ENCODE measurements at regions of chr2 and their contacts with region 1.

Region 1: GRCh38 chr2:20446917-20447436 is at the start of gene RHOB:
- DNase-seq: peak; percentile 89
- H3K4me3 Mint-ChIP-seq: peak within 1 kb of the TSS; percentile 81
- H3K27ac Mint-ChIP-seq: peak within 1 kb of the TSS; percentile 61
- H3K4me1 Mint-ChIP-seq: peaks cover 12% of the 10 kb centered on the region
- H3K27me3 Mint-ChIP-seq: peaks cover 64% of the 10 kb centered on the region
- total RNA-seq, gene RHOB: 27.6 and 29.6 TPM in 2 replicates

Region 2: DNA sequence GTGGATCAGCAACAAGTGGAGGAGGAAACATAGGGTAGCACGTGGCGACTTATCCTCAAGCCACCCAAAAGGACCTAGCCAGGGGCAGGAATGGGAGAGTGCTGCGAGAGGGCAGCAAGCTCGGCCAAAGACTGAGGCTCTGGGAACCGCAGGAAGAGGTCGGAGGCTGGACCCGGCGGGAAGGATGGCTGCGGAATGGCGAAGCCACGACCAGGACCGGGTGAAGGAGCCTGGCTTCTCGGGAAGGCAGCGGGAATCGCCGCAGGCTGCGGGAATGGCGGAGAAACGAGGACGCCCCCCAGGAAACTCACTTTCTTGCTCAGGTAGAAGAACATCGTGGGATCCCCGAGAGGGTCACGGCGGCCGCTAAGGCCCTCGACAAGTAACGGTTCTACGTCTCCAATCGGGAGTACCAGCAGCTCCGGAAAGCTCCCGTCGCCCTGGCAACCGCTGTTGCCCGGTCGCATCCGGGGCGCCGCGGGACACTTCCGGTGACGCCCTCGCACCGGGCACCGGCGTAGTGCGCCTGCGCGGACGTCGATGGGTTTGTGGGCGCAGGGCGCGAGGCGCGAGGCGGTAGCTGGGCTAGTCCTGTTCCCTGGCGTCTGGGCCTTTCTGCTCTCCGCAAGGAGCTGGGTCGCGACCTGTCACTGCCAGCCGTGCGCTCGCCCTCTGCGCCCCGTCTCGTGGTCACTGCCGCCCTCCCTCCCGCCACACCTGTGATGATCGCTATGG is 457.1 kb before region 1 on chr2 and contains the start of gene WDR35:
- intact Hi-C with region 1: loop called (anchors 1 kb)
- DNase-seq: peak; percentile 92
- H3K4me3 Mint-ChIP-seq: peak within 1 kb of the TSS; percentile 90
- H3K27ac Mint-ChIP-seq: peak within 1 kb of the TSS; percentile 69
- H3K4me1 Mint-ChIP-seq: peaks cover 19% of the 10 kb centered on the region
- H3K27me3 Mint-ChIP-seq: peaks cover 30% of the 10 kb centered on the region
- total RNA-seq, gene WDR35: 7.7 and 7.8 TPM in 2 replicates

Region 3: DNA sequence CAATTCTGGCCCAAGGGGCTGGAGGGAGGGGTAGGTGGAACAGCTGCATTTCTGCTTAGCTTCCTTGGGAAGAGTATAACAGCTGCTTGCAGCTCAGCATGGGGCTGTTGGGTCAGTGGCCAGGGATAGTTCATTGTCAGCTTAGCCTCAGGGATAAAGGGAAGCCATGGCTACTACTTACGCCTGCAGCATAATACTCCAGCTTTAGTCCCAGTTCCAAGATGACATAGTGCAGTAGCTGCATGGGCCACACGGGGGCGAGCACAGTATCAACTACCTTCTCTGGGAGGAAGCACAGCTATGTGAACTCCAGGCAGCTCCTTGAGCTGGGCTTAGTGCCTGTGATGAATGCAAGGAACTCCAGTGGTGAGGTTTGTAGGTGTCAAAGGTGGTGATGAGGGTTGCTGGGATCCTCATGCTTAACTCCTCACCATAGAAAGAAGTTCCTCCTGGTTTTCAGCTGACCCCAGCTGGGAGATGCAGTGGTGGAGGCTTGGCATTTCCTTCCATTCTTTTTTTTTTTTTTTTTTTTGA is 35.5 kb before region 1 on chr2:
- intact Hi-C with region 1: loop called (anchors 5 kb)
- DNase-seq: peak; percentile 48
- H3K4me3 Mint-ChIP-seq: no peak overlapping the region
- H3K27ac Mint-ChIP-seq: no peak overlapping the region
- H3K4me1 Mint-ChIP-seq: peaks cover 6% of the 10 kb centered on the region
- H3K27me3 Mint-ChIP-seq: peaks cover 34% of the 10 kb centered on the region

Region 4: DNA sequence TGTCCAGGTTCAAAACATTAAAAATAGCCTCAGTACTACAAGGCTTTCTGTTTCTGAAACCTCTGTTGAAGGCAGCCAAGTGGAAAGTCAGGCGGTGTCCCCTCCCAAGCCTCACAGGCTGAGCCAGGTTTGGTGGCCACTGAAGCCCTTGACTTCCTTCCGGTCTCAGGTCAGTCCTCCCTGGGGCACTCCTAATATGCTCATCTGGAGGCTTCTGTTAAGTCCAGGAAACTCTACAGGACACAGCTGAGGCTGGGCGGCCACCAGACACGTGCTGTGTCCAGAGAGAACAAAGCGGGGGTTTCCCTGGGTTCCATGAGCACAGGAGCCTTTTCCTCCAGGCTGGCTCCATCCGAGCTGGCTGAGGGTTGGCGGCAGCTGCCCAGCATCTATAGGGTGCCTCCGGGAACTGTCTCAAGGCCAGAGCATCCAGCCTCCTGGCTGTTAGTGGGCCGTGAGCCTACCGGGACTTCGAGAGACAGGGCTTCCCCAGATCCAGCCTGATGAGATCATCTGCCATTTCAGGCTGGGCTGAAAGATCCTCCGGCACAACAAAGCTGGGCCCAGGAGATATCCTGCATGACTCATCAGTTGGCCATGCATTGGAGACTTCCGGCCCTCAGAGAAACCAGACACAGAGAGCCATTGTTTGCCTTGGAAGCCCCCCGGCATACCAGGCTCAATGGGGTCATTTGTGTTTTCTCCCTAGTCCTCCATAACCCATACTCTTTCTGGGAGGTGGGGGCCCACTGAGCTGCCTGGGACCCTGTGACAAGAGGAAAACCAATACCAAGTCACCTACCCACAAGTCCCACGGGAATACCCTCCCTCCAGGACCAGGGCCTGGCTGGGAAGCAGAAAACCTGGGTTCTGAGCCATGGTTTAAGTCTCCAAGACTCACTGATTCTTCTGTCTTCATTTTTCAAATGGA is 132.2 kb after region 1 on chr2:
- intact Hi-C with region 1: loop called (anchors 1 kb)
- DNase-seq: no peak
- H3K4me3 Mint-ChIP-seq: no peak overlapping the region
- H3K27ac Mint-ChIP-seq: no peak overlapping the region
- H3K4me1 Mint-ChIP-seq: peaks cover 27% of the 10 kb centered on the region
- H3K27me3 Mint-ChIP-seq: no peaks in the 10 kb centered on the region

Region 5: GRCh38 chr2:20650880-20651730 is 204.1 kb after region 1 on chr2 and contains the start of gene HS1BP3:
- intact Hi-C with region 1: loop called (anchors 1 kb)
- DNase-seq: peak; percentile 91
- H3K4me3 Mint-ChIP-seq: peak within 1 kb of the TSS; percentile 88
- H3K27ac Mint-ChIP-seq: peak within 1 kb of the TSS; percentile 92
- H3K4me1 Mint-ChIP-seq: peaks cover 22% of the 10 kb centered on the region
- H3K27me3 Mint-ChIP-seq: peaks cover 6% of the 10 kb centered on the region
- total RNA-seq, gene HS1BP3: 9.1 and 10.2 TPM in 2 replicates

Measured in activated T-helper 1 cell treated with anti-CD3 and anti-CD28 coated beads, Interleukin-12 subunit alpha, Interleukin-12 subunit beta, Interleukin-2, Interleukin-4 antibody, amounts not matched to agents 30 ng/mL and 10 ng/mL and 1 ng/mL, durations not matched to agents 14 hours and 24 hours and 36 hours (primary cell).